H1 (cell line): ENCODE measurements at regions of chr1 and their contacts with region 1.

Region 1: GRCh38 chr1:26787706-26788514 is at the start of gene PIGV:
- DNase-seq: peak in 1 of 2 experiments; percentile 95
- H3K4me3 ChIP-seq: peak within 1 kb of the TSS; percentile 63 to 84 (median 73)
- H3K27ac ChIP-seq: peak within 1 kb of the TSS; percentile 81
- H3K4me1 ChIP-seq: peaks cover 7 to 18% (median 12%) of the 10 kb centered on the region in 4 experiments; a peak in 6 of 7 replicates
- H3K27me3 ChIP-seq: no peaks in the 10 kb centered on the region
- CTCF ChIP-seq: no peak
- EP300 ChIP-seq: no peak
- POLR2A ChIP-seq: peak; percentile 70 to 87
- RAD21 ChIP-seq: no peak
- total RNA-seq, gene PIGV: 8.5 and 9.3 TPM in 2 replicates

Region 2: GRCh38 chr1:26541816-26542711 is 245.8 kb before region 1 on chr1:
- CTCF ChIA-PET with region 1: interaction called, 11 read pairs
- POLR2A ChIA-PET with region 1: no interaction called
- DNase-seq: peak in 1 of 2 experiments; percentile 78
- H3K4me3 ChIP-seq: no peak overlapping the region; a peak in 1 of 8 replicates
- H3K27ac ChIP-seq: peak overlapping the region; percentile 45; the same call in 1 of the 2 replicates
- H3K4me1 ChIP-seq: peaks cover 0 to 17% (median 7%) of the 10 kb centered on the region in 4 experiments; a peak in 6 of 7 replicates
- H3K27me3 ChIP-seq: no peaks in the 10 kb centered on the region
- CTCF ChIP-seq: peak; percentile 59 to 74 (median 66)
- EP300 ChIP-seq: no peak
- POLR2A ChIP-seq: no peak
- RAD21 ChIP-seq: peak; percentile 34 to 41; a peak in 3 of 4 replicates

Region 3: GRCh38 chr1:26723013-26723991 is 64.6 kb before region 1 on chr1:
- CTCF ChIA-PET with region 1: interaction called, 15 read pairs
- POLR2A ChIA-PET with region 1: interaction called, 7 read pairs
- DNase-seq: peak in 1 of 2 experiments; percentile 79
- H3K4me3 ChIP-seq: peak overlapping the region in 3 of 4 experiments; percentile 2 to 42 (median 15); a peak in 5 of 8 replicates
- H3K27ac ChIP-seq: peak overlapping the region; percentile 54
- H3K4me1 ChIP-seq: peaks cover 20 to 42% (median 26%) of the 10 kb centered on the region in 4 experiments
- H3K27me3 ChIP-seq: no peaks in the 10 kb centered on the region
- CTCF ChIP-seq: no peak
- EP300 ChIP-seq: no peak
- POLR2A ChIP-seq: peak in 1 of 2 experiments; percentile 69; a peak in 1 of 3 replicates
- RAD21 ChIP-seq: no peak

Region 4: GRCh38 chr1:26768755-26769154 is 19.2 kb before region 1 on chr1:
- CTCF ChIA-PET with region 1: interaction called, 13 read pairs
- POLR2A ChIA-PET with region 1: interaction called, 5 read pairs
- DNase-seq: no peak
- H3K4me3 ChIP-seq: no peak overlapping the region
- H3K27ac ChIP-seq: no peak overlapping the region
- H3K4me1 ChIP-seq: no peaks in the 10 kb centered on the region
- H3K27me3 ChIP-seq: no peaks in the 10 kb centered on the region
- CTCF ChIP-seq: no peak
- EP300 ChIP-seq: no peak
- POLR2A ChIP-seq: no peak
- RAD21 ChIP-seq: no peak

Region 5: GRCh38 chr1:26811057-26811456 is 23.1 kb after region 1 on chr1:
- CTCF ChIA-PET with region 1: interaction called, 37 read pairs
- POLR2A ChIA-PET with region 1: interaction called, 3 read pairs
- DNase-seq: no peak
- H3K4me3 ChIP-seq: no peak overlapping the region
- H3K27ac ChIP-seq: no peak overlapping the region
- H3K4me1 ChIP-seq: no peaks in the 10 kb centered on the region
- H3K27me3 ChIP-seq: no peaks in the 10 kb centered on the region
- CTCF ChIP-seq: no peak
- EP300 ChIP-seq: no peak
- POLR2A ChIP-seq: no peak
- RAD21 ChIP-seq: no peak

Region 6: DNA sequence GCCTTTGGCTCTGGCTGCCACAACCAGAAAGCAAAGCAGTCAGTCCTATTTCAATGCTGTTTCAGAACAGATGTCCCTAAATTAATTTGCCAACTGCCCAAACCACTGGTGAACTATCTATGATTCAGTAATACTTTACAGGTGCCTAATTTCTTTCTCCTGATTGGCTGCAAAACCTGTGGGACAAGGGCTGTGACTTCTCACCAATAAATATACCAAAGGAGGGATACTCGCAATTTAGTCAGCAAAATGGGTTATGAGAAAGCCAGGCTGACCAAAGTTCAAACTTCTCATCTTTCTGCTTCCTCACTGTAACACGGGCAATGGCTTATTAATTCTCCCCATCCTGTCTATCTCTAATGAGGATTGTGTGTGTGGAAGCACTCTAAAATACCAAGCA is 89.4 kb after region 1 on chr1:
- CTCF ChIA-PET with region 1: interaction called, 19 read pairs
- POLR2A ChIA-PET with region 1: no interaction called
- DNase-seq: no peak
- H3K4me3 ChIP-seq: no peak overlapping the region
- H3K27ac ChIP-seq: no peak overlapping the region
- H3K4me1 ChIP-seq: peaks cover 0 to 2% (median 0%) of the 10 kb centered on the region in 4 experiments; a peak in 1 of 7 replicates
- H3K27me3 ChIP-seq: no peaks in the 10 kb centered on the region
- CTCF ChIP-seq: no peak
- EP300 ChIP-seq: no peak
- POLR2A ChIP-seq: no peak
- RAD21 ChIP-seq: no peak

Region 7: GRCh38 chr1:27496604-27497155 is 708.8 kb after region 1 on chr1:
- CTCF ChIA-PET with region 1: no interaction called
- POLR2A ChIA-PET with region 1: no interaction called
- DNase-seq: peak in 1 of 2 experiments; percentile 76
- H3K4me3 ChIP-seq: peak overlapping the region in 2 of 4 experiments; percentile 7 to 36; a peak in 3 of 8 replicates
- H3K27ac ChIP-seq: peak overlapping the region; percentile 59; the same call in 1 of the 2 replicates
- H3K4me1 ChIP-seq: peaks cover 3 to 11% (median 6%) of the 10 kb centered on the region in 4 experiments; a peak in 6 of 7 replicates
- H3K27me3 ChIP-seq: no peaks in the 10 kb centered on the region
- CTCF ChIP-seq: peak; percentile 51 to 83 (median 69)
- EP300 ChIP-seq: peak in 1 of 2 experiments; percentile 69; a peak in 1 of 3 replicates
- POLR2A ChIP-seq: no peak
- RAD21 ChIP-seq: peak; percentile 61 to 62